ENCODE measurements at regions of chr10 and their contacts with region 1.

Region 1: DNA sequence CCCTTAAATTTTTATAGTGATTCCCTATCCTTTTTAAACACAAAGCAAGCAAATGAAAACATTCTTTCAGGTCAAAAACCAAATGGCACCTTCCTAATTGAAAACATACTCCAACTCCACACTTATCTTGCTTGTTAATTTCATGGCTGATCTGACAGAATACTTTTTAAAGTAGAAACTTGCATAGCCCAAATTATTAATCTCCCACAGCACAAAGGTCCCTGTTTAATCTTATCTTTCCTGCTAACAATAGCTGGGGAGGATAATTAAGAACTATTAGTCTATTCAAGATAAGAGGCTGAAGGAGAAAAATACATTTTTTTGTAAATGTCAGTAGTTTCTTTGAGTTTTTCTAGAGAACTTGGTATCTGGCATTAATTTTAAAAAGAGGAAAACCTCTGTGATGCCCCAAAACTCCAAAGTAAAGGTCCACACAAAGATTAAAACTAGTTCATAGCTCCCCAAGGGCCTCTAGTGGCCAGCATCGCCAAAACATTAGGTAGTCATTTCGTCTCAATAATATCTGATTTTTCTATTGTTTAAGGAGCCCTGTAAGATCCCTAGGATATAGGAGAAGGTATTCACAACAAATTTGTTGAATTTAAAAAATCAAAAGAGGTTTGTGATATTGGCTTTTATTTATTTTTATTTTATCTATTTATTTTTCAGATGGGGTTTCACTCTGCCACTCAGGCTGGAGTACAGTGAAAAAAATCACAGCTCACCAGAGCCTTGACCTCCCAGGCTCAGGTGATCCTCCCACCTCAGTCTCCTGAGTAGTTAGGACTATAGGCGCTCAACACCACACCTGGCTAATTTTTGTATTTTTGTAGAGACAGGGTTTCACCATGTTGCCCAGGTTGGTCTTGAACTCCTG is 14.7 kb downstream of the CDNF start:
- H3K4me3 ChIP-seq: no peak overlapping the region
- H3K27ac ChIP-seq: no peak overlapping the region
- H3K4me1 ChIP-seq: no peaks in the 10 kb centered on the region
- CTCF ChIP-seq: no peak; the same call in 1 of the 2 replicates

Region 2: GRCh38 chr10:14536241-14537213 is 286.6 kb before region 1 on chr10:
- CTCF ChIA-PET with region 1: interaction called, 26 read pairs
- POLR2A ChIA-PET with region 1: no interaction called
- H3K4me3 ChIP-seq: no peak overlapping the region
- H3K27ac ChIP-seq: no peak overlapping the region
- H3K4me1 ChIP-seq: no peaks in the 10 kb centered on the region
- CTCF ChIP-seq: no peak; the same call in 1 of the 2 replicates

Measured in HEK293 (cell line).